ENCODE measurements at regions of chr4 and their contacts with region 1.

Region 1: GRCh38 chr4:107930821-107931774 is at the start of gene CYP2U1:
- DNase-seq: peak; percentile 48 to 89 (median 80)
- ATAC-seq: peak; percentile 92
- H3K4me3 ChIP-seq: peak within 1 kb of the TSS; percentile 61 to 86
- H3K4me3 Mint-ChIP-seq: peak within 1 kb of the TSS; percentile 95
- H3K27ac ChIP-seq: peak within 1 kb of the TSS; percentile 48 to 55
- H3K27ac Mint-ChIP-seq: peak within 1 kb of the TSS; percentile 92
- H3K4me1 ChIP-seq: peaks cover 8% of the 10 kb centered on the region
- H3K4me1 Mint-ChIP-seq: peaks cover 35% of the 10 kb centered on the region
- H3K27me3 ChIP-seq: no peaks in the 10 kb centered on the region
- H3K27me3 Mint-ChIP-seq: no peaks in the 10 kb centered on the region
- CTCF ChIP-seq: no peak
- total RNA-seq, gene CYP2U1: 3.4 to 3.6 TPM

Region 2: GRCh38 chr4:106315968-106316772 is 1614.9 kb before region 1 on chr4 and contains the starts of genes AIMP1 and TBCK:
- CTCF ChIA-PET with region 1: no interaction called
- POLR2A ChIA-PET with region 1: no interaction called
- intact Hi-C with region 1: loop called in 1 of 2 experiments (anchors 10 kb)
- DNase-seq: peak; percentile 81 to 95 (median 90)
- ATAC-seq: peak; percentile 85
- H3K4me3 ChIP-seq: peak within 1 kb of the TSS; percentile 72 to 85
- H3K4me3 Mint-ChIP-seq: no peak within 1 kb of the TSS
- H3K27ac ChIP-seq: peak within 1 kb of the TSS; percentile 89 to 96
- H3K27ac Mint-ChIP-seq: no peak within 1 kb of the TSS
- H3K4me1 ChIP-seq: peaks cover 19% of the 10 kb centered on the region
- H3K4me1 Mint-ChIP-seq: peaks cover 42% of the 10 kb centered on the region
- H3K27me3 ChIP-seq: no peaks in the 10 kb centered on the region
- H3K27me3 Mint-ChIP-seq: no peaks in the 10 kb centered on the region
- CTCF ChIP-seq: no peak
- total RNA-seq, gene AIMP1: 69.3 to 79.2 TPM
- total RNA-seq, gene TBCK: 17.4 to 20.4 TPM

Region 3: DNA sequence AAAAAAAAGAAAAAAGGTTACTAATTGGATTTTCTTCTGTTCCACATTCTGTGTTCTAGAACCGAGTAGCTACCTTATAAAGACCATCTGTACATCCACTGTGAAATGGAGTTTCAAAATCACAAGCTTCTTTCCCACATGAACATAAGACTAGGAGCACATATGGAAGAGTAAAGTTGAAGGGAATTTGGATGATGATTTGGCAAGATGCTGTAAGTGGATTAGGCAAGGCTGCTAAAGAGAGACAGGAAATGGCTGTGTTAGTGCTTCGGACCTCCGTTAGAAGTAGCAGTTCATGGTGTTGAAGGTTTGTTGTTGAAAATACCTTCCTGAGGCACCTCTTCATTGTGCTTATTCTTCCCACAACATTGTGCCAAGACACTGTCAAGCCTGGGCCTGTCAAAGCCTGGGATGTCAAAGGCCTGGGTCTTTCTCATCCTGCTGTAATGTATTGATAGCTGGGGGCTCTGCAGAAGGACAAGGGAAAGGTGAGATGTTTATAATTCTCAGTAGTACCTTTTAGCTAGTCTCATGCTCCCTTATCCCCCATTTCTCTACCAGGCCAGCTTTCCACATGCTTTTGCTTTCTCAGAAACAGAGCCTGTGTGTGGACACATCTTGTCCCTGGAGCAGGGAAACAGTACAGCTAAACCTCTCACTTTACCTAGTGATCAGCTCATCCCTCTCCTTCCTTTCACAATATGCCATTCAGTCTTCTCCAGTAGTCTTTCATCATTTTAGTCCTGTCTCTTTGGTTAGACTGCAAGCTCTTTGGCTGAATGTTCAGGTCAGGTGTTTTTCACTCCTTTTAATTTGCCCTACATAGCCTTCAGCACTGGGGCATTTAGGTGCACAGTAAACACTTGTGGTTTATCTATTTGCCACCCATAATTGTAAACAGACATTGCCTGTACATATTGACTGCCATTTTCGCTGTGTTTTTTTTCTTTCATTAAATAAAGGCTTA is 37.6 kb before region 1 on chr4:
- CTCF ChIA-PET with region 1: no interaction called
- POLR2A ChIA-PET with region 1: no interaction called
- intact Hi-C with region 1: no loop called
- DNase-seq: no peak
- ATAC-seq: no peak
- H3K4me3 ChIP-seq: no peak overlapping the region
- H3K4me3 Mint-ChIP-seq: no peak overlapping the region
- H3K27ac ChIP-seq: no peak overlapping the region
- H3K27ac Mint-ChIP-seq: no peak overlapping the region
- H3K4me1 ChIP-seq: no peaks in the 10 kb centered on the region
- H3K4me1 Mint-ChIP-seq: no peaks in the 10 kb centered on the region
- H3K27me3 ChIP-seq: no peaks in the 10 kb centered on the region
- H3K27me3 Mint-ChIP-seq: peaks cover 4% of the 10 kb centered on the region
- CTCF ChIP-seq: no peak

Region 4: GRCh38 chr4:108620101-108620932 is 689.2 kb after region 1 on chr4 and contains the start of gene RPL34:
- CTCF ChIA-PET with region 1: no interaction called
- POLR2A ChIA-PET with region 1: interaction called, 3 read pairs
- intact Hi-C with region 1: loop called in 1 of 2 experiments (anchors 1 kb)
- DNase-seq: peak; percentile 94 to 100 (median 97)
- ATAC-seq: peak; percentile 98
- H3K4me3 ChIP-seq: peak within 1 kb of the TSS; percentile 92 to 97
- H3K4me3 Mint-ChIP-seq: peak within 1 kb of the TSS; percentile 93
- H3K27ac ChIP-seq: peak within 1 kb of the TSS; percentile 85 to 90
- H3K27ac Mint-ChIP-seq: peak within 1 kb of the TSS; percentile 96
- H3K4me1 ChIP-seq: peaks cover 50% of the 10 kb centered on the region
- H3K4me1 Mint-ChIP-seq: peaks cover 58% of the 10 kb centered on the region
- H3K27me3 ChIP-seq: no peaks in the 10 kb centered on the region
- H3K27me3 Mint-ChIP-seq: no peaks in the 10 kb centered on the region
- CTCF ChIP-seq: no peak
- total RNA-seq, gene RPL34: 3,253 to 3,442 TPM

Region 5: DNA sequence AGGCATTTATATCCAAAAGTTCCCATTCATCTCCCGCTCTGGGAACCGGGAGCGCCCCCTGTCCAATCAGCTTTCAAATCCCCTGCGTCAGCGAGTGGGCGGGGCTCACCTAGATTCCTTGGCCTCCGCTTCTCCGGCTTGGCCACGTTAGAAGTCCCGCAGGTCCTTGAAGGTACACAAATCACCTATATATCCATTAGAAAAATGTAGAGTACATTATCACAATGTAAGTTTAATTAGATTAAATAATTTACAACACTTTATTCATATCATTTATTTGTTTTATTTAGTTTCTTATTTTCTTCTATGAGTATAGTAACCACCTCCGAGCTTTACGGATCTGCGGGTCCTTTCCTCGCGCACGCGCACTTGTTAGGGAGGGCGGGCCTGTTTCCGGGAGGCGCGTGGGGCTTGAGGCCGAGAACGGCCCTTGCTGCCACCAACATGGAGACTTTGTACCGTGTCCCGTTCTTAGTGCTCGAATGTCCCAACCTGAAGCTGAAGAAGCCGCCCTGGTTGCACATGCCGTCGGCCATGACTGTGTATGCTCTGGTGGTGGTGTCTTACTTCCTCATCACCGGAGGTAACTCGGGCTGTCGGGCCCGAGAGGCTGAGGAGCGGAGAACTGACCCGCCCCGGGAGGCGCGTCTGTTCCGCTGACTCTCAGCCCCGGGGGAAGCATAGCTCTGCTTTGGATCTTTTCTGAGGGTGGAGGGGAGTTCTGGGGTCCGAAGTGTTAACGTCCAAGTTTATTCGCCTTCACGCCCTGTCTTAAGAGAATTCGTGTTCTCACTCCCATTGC is 719.3 kb after region 1 on chr4 and contains the start of gene OSTC:
- CTCF ChIA-PET with region 1: no interaction called
- POLR2A ChIA-PET with region 1: no interaction called
- intact Hi-C with region 1: loop called in 1 of 2 experiments (anchors 1 kb)
- DNase-seq: peak; percentile 81 to 96 (median 93)
- ATAC-seq: peak; percentile 89
- H3K4me3 ChIP-seq: peak within 1 kb of the TSS; percentile 83 to 98
- H3K4me3 Mint-ChIP-seq: peak within 1 kb of the TSS; percentile 93
- H3K27ac ChIP-seq: peak within 1 kb of the TSS; percentile 93 to 94
- H3K27ac Mint-ChIP-seq: peak within 1 kb of the TSS; percentile 98
- H3K4me1 ChIP-seq: peaks cover 23% of the 10 kb centered on the region
- H3K4me1 Mint-ChIP-seq: peaks cover 40% of the 10 kb centered on the region
- H3K27me3 ChIP-seq: no peaks in the 10 kb centered on the region
- H3K27me3 Mint-ChIP-seq: no peaks in the 10 kb centered on the region
- CTCF ChIP-seq: no peak
- total RNA-seq, gene OSTC: 25.6 to 28.1 TPM